ENCODE measurements at regions of chr9 and their contacts with region 1.

Region 1: GRCh38 chr9:73863924-73864323 is 633.2 kb upstream of the RORB start:
- DNase-seq: no peak
- H3K4me3 ChIP-seq: no peak overlapping the region
- H3K27ac ChIP-seq: no peak overlapping the region
- H3K4me1 ChIP-seq: no peaks in the 10 kb centered on the region
- H3K27me3 ChIP-seq: no peaks in the 10 kb centered on the region
- CTCF ChIP-seq: no peak
- POLR2A ChIP-seq: no peak

Region 2: DNA sequence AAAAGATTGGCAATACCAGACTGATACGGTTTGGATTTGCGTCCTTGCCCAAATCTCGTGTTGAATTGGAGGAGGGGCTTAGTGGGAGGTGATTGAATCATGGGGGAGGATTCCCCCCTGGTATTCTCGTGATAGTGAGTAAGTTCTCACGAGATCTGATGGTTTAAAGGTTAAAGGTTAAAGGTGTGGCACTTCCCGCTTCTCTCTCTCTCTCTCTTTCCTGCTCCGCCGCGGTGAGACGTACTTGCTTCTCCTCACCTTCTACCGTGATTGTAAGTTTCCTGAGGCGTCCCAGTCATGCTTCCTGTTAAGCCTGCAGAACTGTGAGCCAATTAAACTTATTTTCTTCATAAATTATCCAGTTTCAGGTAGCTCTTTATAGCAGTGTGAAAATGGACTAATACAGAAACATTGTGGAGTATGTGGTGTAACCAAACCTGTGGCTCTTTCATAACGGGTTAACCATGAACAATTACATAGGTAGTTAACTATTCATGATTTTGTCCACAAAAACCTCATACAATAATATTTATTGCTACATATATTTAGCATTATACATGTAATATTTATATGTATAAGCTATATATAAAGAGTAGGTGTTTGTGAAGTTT is 604.7 kb before region 1 on chr9:
- intact Hi-C with region 1: loop called (anchors 5 kb)
- DNase-seq: no peak
- H3K4me3 ChIP-seq: no peak overlapping the region
- H3K27ac ChIP-seq: no peak overlapping the region
- H3K4me1 ChIP-seq: no peaks in the 10 kb centered on the region
- H3K27me3 ChIP-seq: no peaks in the 10 kb centered on the region
- CTCF ChIP-seq: no peak
- POLR2A ChIP-seq: no peak

Region 3: DNA sequence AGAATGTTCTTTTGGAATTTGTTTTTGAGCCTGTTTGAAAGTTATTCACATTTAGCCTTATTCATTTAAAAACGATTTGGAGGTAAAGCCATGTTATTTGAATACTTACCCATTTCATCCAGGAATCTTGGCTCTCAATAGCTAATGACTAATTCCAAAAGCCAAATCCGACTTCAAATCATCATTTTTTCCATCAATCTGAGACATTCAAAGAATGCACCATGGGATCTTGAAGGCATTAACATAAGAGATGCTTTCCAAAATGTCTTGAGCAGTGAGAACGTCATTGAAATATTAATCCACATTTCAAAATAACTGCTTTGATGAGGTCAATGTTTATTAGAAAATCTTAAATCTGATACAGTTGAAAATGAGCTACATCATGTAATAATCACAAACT is 16.2 kb after region 1 on chr9:
- intact Hi-C with region 1: no loop called
- DNase-seq: no peak
- H3K4me3 ChIP-seq: no peak overlapping the region
- H3K27ac ChIP-seq: no peak overlapping the region
- H3K4me1 ChIP-seq: no peaks in the 10 kb centered on the region
- H3K27me3 ChIP-seq: no peaks in the 10 kb centered on the region
- CTCF ChIP-seq: no peak
- POLR2A ChIP-seq: no peak

Measured in breast epithelium (tissue), 4 donors.